ENCODE measurements at regions of chr3 and their contacts with region 1.

Region 1: DNA sequence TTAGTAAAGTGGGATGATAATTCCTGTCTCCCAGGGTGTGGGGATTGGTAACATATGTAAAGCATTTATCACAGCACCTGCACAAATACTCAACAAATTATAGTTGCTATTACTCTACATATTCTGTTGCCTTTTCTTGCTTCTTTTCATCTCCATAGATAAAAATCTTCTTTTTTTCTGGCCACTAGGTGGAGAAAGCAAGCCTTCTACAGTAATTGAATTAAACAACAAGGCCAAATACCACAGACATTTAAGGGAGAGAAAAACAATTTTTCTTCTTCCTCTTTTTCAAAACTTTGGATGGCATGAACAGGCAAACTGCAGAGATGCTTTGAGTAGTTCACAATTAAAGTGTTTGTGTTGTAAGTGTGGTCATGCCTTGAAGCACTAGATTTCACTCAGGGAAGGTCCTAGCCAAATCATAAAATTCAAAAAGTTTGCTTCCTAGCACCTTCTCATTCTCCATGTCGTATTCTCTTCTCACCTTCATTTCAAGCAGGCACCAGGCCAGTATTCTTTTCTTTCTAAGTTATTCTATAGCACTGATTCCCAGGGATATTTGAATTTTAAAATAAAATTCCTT is 493.4 kb upstream of the TGFBR2 start:
- DNase-seq: no peak
- H3K4me3 ChIP-seq: no peak overlapping the region
- H3K27ac ChIP-seq: no peak overlapping the region
- H3K4me1 ChIP-seq: peaks cover 0 to 22% (median 9%) of the 10 kb centered on the region in 4 donors
- H3K27me3 ChIP-seq: no peaks in the 10 kb centered on the region
- CTCF ChIP-seq: peak; percentile 58 to 76 (median 65)
- EP300 ChIP-seq: no peak
- POLR2A ChIP-seq: no peak

Region 2: DNA sequence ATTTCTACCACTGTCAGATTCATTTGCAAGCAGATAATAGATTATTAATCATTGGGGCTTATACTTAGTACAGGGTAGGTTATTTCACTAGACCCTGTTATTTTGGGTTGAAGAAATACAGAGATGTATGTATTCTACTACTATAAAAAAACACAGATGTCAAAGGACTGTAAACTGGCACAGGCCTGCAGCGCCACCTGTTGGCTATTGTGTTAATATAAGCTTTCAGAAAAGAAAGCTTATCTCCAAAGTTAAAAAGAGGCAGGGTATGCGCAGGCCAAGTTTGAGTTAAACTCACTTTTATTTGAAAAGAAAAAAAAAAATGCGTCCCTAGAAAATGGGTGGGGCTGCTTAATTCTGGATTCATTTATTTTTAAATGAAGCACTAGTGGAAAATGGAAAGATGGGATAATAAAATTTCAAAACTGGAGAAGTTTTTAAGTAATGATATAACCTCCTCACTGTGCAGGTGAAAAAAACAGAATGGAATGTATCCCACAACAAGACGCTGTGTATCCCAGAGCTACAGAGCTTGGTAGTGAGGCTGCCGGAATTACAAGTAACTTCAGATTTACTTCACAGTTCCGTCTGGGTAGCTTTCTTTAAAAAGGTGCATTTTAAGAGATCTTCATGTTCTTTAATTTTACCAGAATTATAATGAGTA is 86.2 kb after region 1 on chr3:
- in situ Hi-C with region 1: loop called in 1 of 4 experiments (anchors 10 kb)
- intact Hi-C with region 1: no loop called
- DNase-seq: peak; percentile 76
- H3K4me3 ChIP-seq: no peak overlapping the region
- H3K27ac ChIP-seq: no peak overlapping the region
- H3K4me1 ChIP-seq: peaks cover 0 to 8% (median 0%) of the 10 kb centered on the region in 4 donors
- H3K27me3 ChIP-seq: no peaks in the 10 kb centered on the region
- CTCF ChIP-seq: peak; percentile 81 to 89 (median 83)
- EP300 ChIP-seq: no peak
- POLR2A ChIP-seq: no peak

Region 3: DNA sequence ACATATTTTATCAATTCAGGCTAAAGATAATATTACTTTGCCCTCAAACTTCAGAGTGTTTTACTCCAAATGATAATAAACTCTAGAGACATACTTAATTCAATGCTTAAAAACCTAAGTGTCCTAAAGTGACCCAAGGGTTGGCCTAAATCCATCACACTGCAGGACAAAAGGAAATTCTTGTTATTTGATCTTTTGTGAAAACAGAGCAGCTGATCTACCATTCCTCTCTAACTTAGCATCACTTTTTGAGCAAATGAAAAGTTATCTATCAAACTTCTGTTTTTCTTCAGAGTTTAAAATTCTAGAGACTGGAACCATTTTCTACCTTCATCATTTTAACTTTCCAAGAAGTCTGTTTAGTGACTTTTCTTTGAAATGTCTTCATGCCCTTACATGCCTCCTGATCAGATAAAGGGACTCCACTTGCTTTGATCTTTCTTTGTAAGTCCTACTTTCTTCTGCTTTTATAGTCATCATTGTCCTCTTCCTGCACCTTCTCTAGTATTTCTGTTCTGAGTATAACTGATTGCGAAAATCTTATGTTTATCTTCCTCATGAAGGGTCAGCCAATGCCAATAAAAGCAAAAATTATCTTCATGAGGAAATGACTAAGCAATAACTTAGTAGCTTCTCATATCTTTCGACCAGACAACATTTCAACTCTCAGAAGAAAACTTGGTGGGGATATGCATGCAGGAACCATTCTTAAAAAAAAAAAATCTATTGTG is 114.7 kb after region 1 on chr3:
- in situ Hi-C with region 1: no loop called
- intact Hi-C with region 1: no loop called
- DNase-seq: no peak
- H3K4me3 ChIP-seq: no peak overlapping the region
- H3K27ac ChIP-seq: no peak overlapping the region
- H3K4me1 ChIP-seq: peaks cover 0 to 20% (median 5%) of the 10 kb centered on the region in 4 donors
- H3K27me3 ChIP-seq: no peaks in the 10 kb centered on the region
- CTCF ChIP-seq: no peak
- EP300 ChIP-seq: no peak
- POLR2A ChIP-seq: no peak

Measured in transverse colon (tissue), 4 donors.